ENCODE measurements at regions of chr1 and their contacts with region 1.

Region 1: GRCh38 chr1:244047621-244048471 is 3.2 kb upstream of the ZBTB18 start:
- DNase-seq: peak; percentile 81
- ATAC-seq: peak; percentile 98
- H3K4me3 ChIP-seq: peak overlapping the region; percentile 76 to 84
- H3K27ac ChIP-seq: peak overlapping the region; percentile 64
- H3K4me1 ChIP-seq: peaks cover 19% of the 10 kb centered on the region
- H3K27me3 ChIP-seq: peaks cover 21% of the 10 kb centered on the region
- CTCF ChIP-seq: no peak

Region 2: DNA sequence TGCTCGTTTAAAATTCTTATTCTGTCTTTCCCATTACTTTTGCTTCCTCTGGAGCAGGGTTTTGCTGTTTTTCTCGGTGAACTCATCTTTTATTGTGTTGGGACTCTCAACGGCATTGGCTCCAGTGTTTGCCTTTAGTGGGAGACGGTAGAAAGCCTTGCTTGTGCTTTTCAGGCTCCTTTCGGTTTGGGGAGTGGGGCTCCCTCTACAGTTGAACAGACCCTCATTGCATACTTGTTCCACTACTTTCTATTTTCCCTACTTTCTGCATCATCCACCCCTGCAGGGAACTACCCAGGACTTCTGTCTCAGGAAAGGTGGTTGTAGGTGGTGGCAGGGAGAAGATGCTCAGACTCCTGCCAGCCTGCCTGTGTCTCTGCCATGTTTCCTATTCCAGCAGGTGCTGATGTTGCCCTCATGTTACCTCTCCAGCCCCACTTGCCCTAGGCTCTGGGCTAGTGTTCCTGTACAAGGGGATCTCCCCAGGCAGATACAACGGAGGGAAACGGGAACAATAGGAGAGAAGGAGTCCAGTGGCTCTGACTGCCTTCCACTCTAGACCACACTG is 65.3 kb before region 1 on chr1:
- CTCF ChIA-PET with region 1: no interaction called
- POLR2A ChIA-PET with region 1: no interaction called
- in situ Hi-C with region 1: no loop called
- intact Hi-C with region 1: loop called (anchors 10 kb)
- DNase-seq: no peak
- ATAC-seq: no peak
- H3K4me3 ChIP-seq: no peak overlapping the region
- H3K27ac ChIP-seq: no peak overlapping the region
- H3K4me1 ChIP-seq: no peaks in the 10 kb centered on the region
- H3K27me3 ChIP-seq: no peaks in the 10 kb centered on the region; the same call in 1 of the 2 replicates
- CTCF ChIP-seq: no peak

Region 3: GRCh38 chr1:244074559-244075171 is 26.8 kb after region 1 on chr1:
- CTCF ChIA-PET with region 1: interaction called, 10 read pairs
- POLR2A ChIA-PET with region 1: no interaction called
- in situ Hi-C with region 1: no loop called
- intact Hi-C with region 1: no loop called
- DNase-seq: no peak
- ATAC-seq: no peak
- H3K4me3 ChIP-seq: no peak overlapping the region
- H3K27ac ChIP-seq: no peak overlapping the region
- H3K4me1 ChIP-seq: no peaks in the 10 kb centered on the region; the same call in 1 of the 2 replicates
- H3K27me3 ChIP-seq: peaks cover 5% of the 10 kb centered on the region; the same call in 1 of the 2 replicates
- CTCF ChIP-seq: no peak

Region 4: GRCh38 chr1:244113532-244114320 is 65.9 kb after region 1 on chr1:
- CTCF ChIA-PET with region 1: no interaction called
- POLR2A ChIA-PET with region 1: no interaction called
- in situ Hi-C with region 1: no loop called
- intact Hi-C with region 1: no loop called
- DNase-seq: no peak
- ATAC-seq: no peak
- H3K4me3 ChIP-seq: no peak overlapping the region
- H3K27ac ChIP-seq: no peak overlapping the region
- H3K4me1 ChIP-seq: no peaks in the 10 kb centered on the region
- H3K27me3 ChIP-seq: peaks cover 2% of the 10 kb centered on the region; the same call in 1 of the 2 replicates
- CTCF ChIP-seq: no peak

Measured in Panc1 (cell line).